ENCODE measurements at regions of chr3 and their contacts with region 1.

Region 1: GRCh38 chr3:100316641-100317069 is 17.9 kb upstream of the NIT2 start:
- DNase-seq: no peak
- H3K4me3 ChIP-seq: no peak overlapping the region
- H3K27ac ChIP-seq: no peak overlapping the region
- H3K4me1 ChIP-seq: no peaks in the 10 kb centered on the region
- H3K27me3 ChIP-seq: no peaks in the 10 kb centered on the region
- CTCF ChIP-seq: peak in 3 of 4 experiments; percentile 58 to 70 (median 63)
- POLR2A ChIP-seq: no peak

Region 2: GRCh38 chr3:100103558-100104441 is 212.9 kb before region 1 on chr3:
- intact Hi-C with region 1: no loop called
- DNase-seq: no peak
- H3K4me3 ChIP-seq: no peak overlapping the region
- H3K27ac ChIP-seq: no peak overlapping the region
- H3K4me1 ChIP-seq: peaks cover 5% of the 10 kb centered on the region
- H3K27me3 ChIP-seq: no peaks in the 10 kb centered on the region
- CTCF ChIP-seq: no peak
- POLR2A ChIP-seq: no peak

Region 3: GRCh38 chr3:100386437-100387074 is 69.9 kb after region 1 on chr3:
- intact Hi-C with region 1: no loop called
- DNase-seq: no peak
- H3K4me3 ChIP-seq: no peak overlapping the region
- H3K27ac ChIP-seq: no peak overlapping the region
- H3K4me1 ChIP-seq: no peaks in the 10 kb centered on the region
- H3K27me3 ChIP-seq: no peaks in the 10 kb centered on the region
- CTCF ChIP-seq: no peak
- POLR2A ChIP-seq: no peak

Region 4: GRCh38 chr3:100590114-100590839 is 273.6 kb after region 1 on chr3:
- intact Hi-C with region 1: loop called (anchors 10 kb)
- DNase-seq: peak; percentile 70
- H3K4me3 ChIP-seq: no peak overlapping the region
- H3K27ac ChIP-seq: no peak overlapping the region
- H3K4me1 ChIP-seq: no peaks in the 10 kb centered on the region
- H3K27me3 ChIP-seq: no peaks in the 10 kb centered on the region
- CTCF ChIP-seq: peak; percentile 82 to 92 (median 84)
- POLR2A ChIP-seq: no peak